ENCODE measurements at regions of chr1 and their contacts with region 1.

Region 1: GRCh38 chr1:36463803-36464604 is at the start of gene MRPS15:
- DNase-seq: peak; percentile 98
- H3K4me3 Mint-ChIP-seq: peak within 1 kb of the TSS; percentile 99
- H3K27ac Mint-ChIP-seq: peak within 1 kb of the TSS; percentile 97
- H3K4me1 Mint-ChIP-seq: peaks cover 28% of the 10 kb centered on the region
- H3K27me3 Mint-ChIP-seq: no peaks in the 10 kb centered on the region
- total RNA-seq, gene MRPS15: 122 to 141 TPM

Region 2: GRCh38 chr1:36436817-36437216 is 27.2 kb before region 1 on chr1:
- CTCF ChIA-PET with region 1: no interaction called
- intact Hi-C with region 1: no loop called
- DNase-seq: no peak
- H3K4me3 Mint-ChIP-seq: no peak overlapping the region
- H3K27ac Mint-ChIP-seq: no peak overlapping the region
- H3K4me1 Mint-ChIP-seq: no peaks in the 10 kb centered on the region
- H3K27me3 Mint-ChIP-seq: no peaks in the 10 kb centered on the region

Region 3: GRCh38 chr1:36450270-36450918 is 13.6 kb before region 1 on chr1 and contains the start of gene OSCP1:
- CTCF ChIA-PET with region 1: interaction called, 3 read pairs
- intact Hi-C with region 1: loop called (anchors 1 kb)
- DNase-seq: peak; percentile 87
- H3K4me3 Mint-ChIP-seq: peak within 1 kb of the TSS; percentile 90
- H3K27ac Mint-ChIP-seq: peak within 1 kb of the TSS; percentile 71
- H3K4me1 Mint-ChIP-seq: peaks cover 17% of the 10 kb centered on the region
- H3K27me3 Mint-ChIP-seq: no peaks in the 10 kb centered on the region
- total RNA-seq, gene OSCP1: 2.2 to 2.6 TPM